ENCODE measurements at regions of chr19 and their contacts with region 1.

Region 1: DNA sequence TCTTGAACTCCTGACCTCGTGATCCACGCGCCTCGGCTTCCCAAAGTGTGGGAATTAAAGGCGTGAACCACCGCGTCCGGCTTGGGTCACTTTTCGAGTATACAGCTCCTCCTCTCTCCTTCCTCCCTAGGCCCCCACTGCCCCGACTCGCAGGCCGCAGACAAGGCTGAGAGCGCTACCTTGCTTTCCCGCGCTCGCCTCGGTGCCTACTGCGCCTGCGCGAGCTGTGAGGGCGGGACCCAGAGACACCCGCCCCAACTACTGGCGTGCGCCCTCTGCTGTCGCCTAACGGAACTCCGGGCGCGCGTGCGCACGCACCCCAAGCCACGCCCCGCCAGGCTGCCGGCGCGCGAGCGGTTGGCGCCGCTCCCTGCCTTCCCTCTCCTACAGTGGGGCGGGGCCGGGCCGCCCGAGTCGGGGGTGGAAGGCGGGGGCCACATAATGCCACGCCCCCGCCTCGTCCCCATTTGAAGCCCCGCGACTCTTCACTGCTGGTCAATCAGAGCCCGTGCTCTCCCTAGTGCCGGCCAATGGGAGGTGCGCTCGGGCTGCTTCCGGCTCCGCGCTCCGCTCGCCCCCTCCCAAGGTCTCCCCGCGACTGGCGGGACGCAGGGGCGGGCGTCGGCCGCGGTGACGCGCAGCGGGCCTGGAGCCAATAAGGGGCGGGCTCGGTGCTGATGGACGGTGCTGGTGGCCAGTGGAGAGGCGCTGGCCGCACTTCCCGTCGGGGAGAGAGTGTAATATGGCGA is at the start of gene RAB8A:
- DNase-seq: peak; percentile 93
- H3K4me3 ChIP-seq: peak within 1 kb of the TSS; percentile 92
- CTCF ChIP-seq: peak; percentile 90

Region 2: GRCh38 chr19:16003391-16003927 is 107.9 kb before region 1 on chr19:
- CTCF ChIA-PET with region 1: no interaction called
- POLR2A ChIA-PET with region 1: no interaction called
- DNase-seq: no peak
- H3K4me3 ChIP-seq: no peak overlapping the region
- CTCF ChIP-seq: no peak

Region 3: DNA sequence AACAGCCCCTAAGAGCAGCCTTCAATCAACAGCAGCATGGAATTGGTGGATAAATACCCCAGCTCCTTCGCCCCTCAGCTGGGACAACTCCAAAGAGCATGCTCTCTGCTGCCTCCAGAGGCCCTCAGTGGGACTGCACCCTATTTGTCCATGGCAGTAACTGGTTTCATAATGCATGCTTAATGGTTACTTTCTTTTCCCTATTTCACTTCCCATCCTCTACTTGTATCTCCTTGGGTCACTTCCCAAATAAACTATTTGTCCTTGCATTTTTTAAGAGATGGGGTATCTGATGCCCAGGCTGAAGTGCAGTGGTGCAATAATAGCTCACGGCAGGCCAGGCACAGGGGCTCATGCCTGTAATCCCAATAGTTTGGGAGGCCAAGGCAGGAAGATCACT is 48.5 kb before region 1 on chr19:
- CTCF ChIA-PET with region 1: interaction called, 11 read pairs
- POLR2A ChIA-PET with region 1: no interaction called
- DNase-seq: no peak
- H3K4me3 ChIP-seq: no peak overlapping the region
- CTCF ChIP-seq: peak; percentile 84

Region 4: GRCh38 chr19:16085115-16085514 is 26.2 kb before region 1 on chr19:
- CTCF ChIA-PET with region 1: interaction called, 10 read pairs
- POLR2A ChIA-PET with region 1: no interaction called
- DNase-seq: no peak
- H3K4me3 ChIP-seq: no peak overlapping the region
- CTCF ChIP-seq: no peak

Region 5: DNA sequence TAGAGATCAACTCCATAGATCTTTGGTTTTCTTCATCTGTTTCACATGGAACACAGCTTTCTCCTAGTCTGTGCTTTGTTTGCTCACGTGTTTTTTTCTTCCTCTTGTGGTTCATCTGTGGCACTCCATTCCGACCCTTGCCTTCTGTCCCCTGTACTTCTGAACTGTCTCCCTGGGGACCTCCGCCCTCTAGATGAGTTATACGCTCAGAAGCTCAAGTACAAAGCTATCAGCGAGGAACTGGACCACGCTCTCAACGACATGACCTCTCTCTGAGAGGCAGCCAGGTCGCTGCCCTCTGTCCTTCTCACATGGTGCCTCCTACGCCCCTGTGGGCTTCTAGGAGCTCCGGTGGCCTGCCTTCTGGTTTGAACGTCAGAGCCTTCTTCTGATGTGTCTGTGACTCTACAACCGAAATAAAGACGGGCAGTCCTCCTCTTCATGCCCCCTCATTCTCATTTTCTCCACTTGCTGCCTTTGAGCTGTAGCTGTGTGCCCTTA is 16.2 kb before region 1 on chr19:
- CTCF ChIA-PET with region 1: interaction called, 27 read pairs
- POLR2A ChIA-PET with region 1: interaction called, 4 read pairs
- DNase-seq: no peak
- H3K4me3 ChIP-seq: no peak overlapping the region
- CTCF ChIP-seq: no peak

Region 6: GRCh38 chr19:16121973-16122372 is 10.6 kb after region 1 on chr19:
- CTCF ChIA-PET with region 1: interaction called, 19 read pairs
- POLR2A ChIA-PET with region 1: no interaction called
- DNase-seq: no peak
- H3K4me3 ChIP-seq: no peak overlapping the region
- CTCF ChIP-seq: no peak

Region 7: GRCh38 chr19:16528073-16528472 is 416.7 kb after region 1 on chr19:
- CTCF ChIA-PET with region 1: no interaction called
- POLR2A ChIA-PET with region 1: no interaction called
- DNase-seq: no peak
- H3K4me3 ChIP-seq: no peak overlapping the region
- CTCF ChIP-seq: no peak

Measured in AG04449 (cell line).